ENCODE measurements at regions of chr6 and their contacts with region 1.

Region 1: DNA sequence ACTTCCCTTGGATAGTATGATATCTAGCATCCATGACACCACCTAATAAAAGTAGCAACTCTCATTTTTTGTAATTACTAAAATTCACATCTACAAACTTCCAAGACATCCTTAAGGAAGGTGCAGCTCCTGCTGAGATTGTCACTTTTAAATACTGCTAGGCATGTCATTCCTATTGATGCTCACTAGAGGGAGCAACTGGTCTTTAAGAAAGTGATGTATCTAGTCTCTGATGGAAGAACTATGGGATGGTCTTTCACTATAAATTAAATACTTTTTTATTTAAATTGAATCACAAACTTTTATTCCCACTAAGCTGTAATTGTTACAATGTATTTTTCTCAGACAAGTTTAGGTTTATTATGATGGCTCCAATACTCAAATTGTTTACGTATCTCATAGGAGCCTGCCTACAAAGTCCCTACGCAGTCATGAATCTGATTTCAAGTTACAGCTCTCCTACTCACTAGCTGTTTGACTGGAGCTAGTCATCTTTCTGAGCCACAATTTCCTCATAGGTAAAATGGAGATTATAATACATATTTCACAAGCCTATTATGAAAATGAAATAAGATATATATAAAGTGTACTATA is 8.1 kb upstream of the TSPYL1 start:
- DNase-seq: peak; percentile 21
- H3K4me3 ChIP-seq: no peak overlapping the region
- H3K27ac ChIP-seq: no peak overlapping the region
- H3K4me1 ChIP-seq: no peaks in the 10 kb centered on the region
- H3K27me3 ChIP-seq: no peaks in the 10 kb centered on the region
- CTCF ChIP-seq: peak; percentile 92
- EP300 ChIP-seq: no peak
- RAD21 ChIP-seq: peak; percentile 90

Region 2: GRCh38 chr6:115817161-115817560 is 470.6 kb before region 1 on chr6:
- CTCF ChIA-PET with region 1: no interaction called
- POLR2A ChIA-PET with region 1: no interaction called
- DNase-seq: no peak
- H3K4me3 ChIP-seq: no peak overlapping the region
- H3K27ac ChIP-seq: no peak overlapping the region
- H3K4me1 ChIP-seq: no peaks in the 10 kb centered on the region
- H3K27me3 ChIP-seq: no peaks in the 10 kb centered on the region
- CTCF ChIP-seq: no peak
- EP300 ChIP-seq: no peak
- RAD21 ChIP-seq: no peak

Region 3: GRCh38 chr6:116217069-116217468 is 70.7 kb before region 1 on chr6:
- CTCF ChIA-PET with region 1: interaction called, 10 read pairs
- POLR2A ChIA-PET with region 1: no interaction called
- DNase-seq: no peak
- H3K4me3 ChIP-seq: no peak overlapping the region
- H3K27ac ChIP-seq: peak overlapping the region; percentile 0 to 34; a peak in 1 of 4 replicates
- H3K4me1 ChIP-seq: peaks cover 3 to 9% of the 10 kb centered on the region in 2 experiments; a peak in 2 of 4 replicates
- H3K27me3 ChIP-seq: no peaks in the 10 kb centered on the region
- CTCF ChIP-seq: peak; percentile 70
- EP300 ChIP-seq: no peak
- RAD21 ChIP-seq: peak; percentile 58

Region 4: DNA sequence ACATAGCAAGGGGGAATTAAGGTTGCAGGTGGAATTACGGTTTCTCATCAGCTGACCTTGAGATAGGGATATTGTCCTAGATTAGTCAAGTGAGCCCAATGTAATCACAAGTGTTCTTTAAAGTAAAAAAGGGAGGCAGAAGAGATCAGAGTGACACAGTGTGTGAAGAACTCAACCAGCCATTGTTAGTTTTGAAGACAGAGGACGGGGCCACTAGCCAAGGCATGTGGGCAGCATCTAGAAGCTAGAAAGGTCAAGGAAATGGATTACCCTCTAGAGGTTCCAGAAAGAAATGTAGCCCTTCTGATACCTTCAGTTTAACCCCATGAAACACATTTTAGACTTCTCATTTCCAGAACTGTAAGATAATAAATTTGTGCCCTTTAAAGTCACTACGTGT is 10.5 kb after region 1 on chr6:
- CTCF ChIA-PET with region 1: interaction called, 16 read pairs
- POLR2A ChIA-PET with region 1: no interaction called
- DNase-seq: no peak
- H3K4me3 ChIP-seq: no peak overlapping the region
- H3K27ac ChIP-seq: no peak overlapping the region
- H3K4me1 ChIP-seq: no peaks in the 10 kb centered on the region; a peak in 1 of 4 replicates
- H3K27me3 ChIP-seq: no peaks in the 10 kb centered on the region
- CTCF ChIP-seq: no peak
- EP300 ChIP-seq: no peak
- RAD21 ChIP-seq: no peak

Region 5: GRCh38 chr6:116426551-116426950 is 138.8 kb after region 1 on chr6:
- CTCF ChIA-PET with region 1: interaction called, 10 read pairs
- POLR2A ChIA-PET with region 1: no interaction called
- DNase-seq: no peak
- H3K4me3 ChIP-seq: no peak overlapping the region
- H3K27ac ChIP-seq: no peak overlapping the region
- H3K4me1 ChIP-seq: no peaks in the 10 kb centered on the region
- H3K27me3 ChIP-seq: no peaks in the 10 kb centered on the region
- CTCF ChIP-seq: no peak
- EP300 ChIP-seq: no peak
- RAD21 ChIP-seq: no peak

Region 6: GRCh38 chr6:116511404-116512110 is 223.8 kb after region 1 on chr6 and contains the start of gene CALHM5:
- CTCF ChIA-PET with region 1: interaction called, 14 read pairs
- POLR2A ChIA-PET with region 1: no interaction called
- DNase-seq: no peak
- H3K4me3 ChIP-seq: peak within 1 kb of the TSS; percentile 9 to 53; a peak in 3 of 4 replicates
- H3K27ac ChIP-seq: peak within 1 kb of the TSS; percentile 43 to 55; a peak in 3 of 4 replicates
- H3K4me1 ChIP-seq: peaks cover 0 to 16% of the 10 kb centered on the region in 2 experiments; a peak in 3 of 4 replicates
- H3K27me3 ChIP-seq: no peaks in the 10 kb centered on the region
- CTCF ChIP-seq: peak; percentile 86
- EP300 ChIP-seq: peak in 1 of 2 experiments; percentile 22; a peak in 1 of 4 replicates
- RAD21 ChIP-seq: peak; percentile 45
- polyA plus RNA-seq, gene CALHM5: 0.38 and 0.55 TPM in 2 replicates

Region 7: DNA sequence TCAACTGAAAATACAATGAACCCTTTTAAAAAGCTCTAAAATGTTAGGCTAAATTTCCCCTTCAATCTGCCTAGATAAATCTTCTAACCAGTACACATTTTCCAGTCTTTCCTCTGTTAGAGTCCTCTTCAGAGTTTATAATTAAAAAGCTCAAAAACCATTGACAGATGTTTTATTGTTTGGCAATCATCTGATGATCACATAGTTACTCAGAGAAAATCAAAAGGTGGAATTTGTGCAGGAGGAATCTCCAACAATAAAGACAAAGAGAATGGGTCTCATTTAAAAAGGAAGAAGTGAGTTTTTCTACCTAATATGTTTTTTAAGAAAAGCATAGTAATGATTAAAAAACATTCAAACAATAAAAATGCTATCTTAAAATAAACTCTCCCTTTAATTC is 254.6 kb after region 1 on chr6:
- CTCF ChIA-PET with region 1: interaction called, 16 read pairs
- POLR2A ChIA-PET with region 1: no interaction called
- DNase-seq: no peak
- H3K4me3 ChIP-seq: no peak overlapping the region
- H3K27ac ChIP-seq: no peak overlapping the region
- H3K4me1 ChIP-seq: no peaks in the 10 kb centered on the region; a peak in 1 of 4 replicates
- H3K27me3 ChIP-seq: no peaks in the 10 kb centered on the region
- CTCF ChIP-seq: no peak
- EP300 ChIP-seq: no peak
- RAD21 ChIP-seq: no peak

Region 8: GRCh38 chr6:116561377-116562018 is 273.7 kb after region 1 on chr6:
- CTCF ChIA-PET with region 1: interaction called, 58 read pairs
- POLR2A ChIA-PET with region 1: no interaction called
- DNase-seq: peak; percentile 70
- H3K4me3 ChIP-seq: no peak overlapping the region; a peak in 1 of 4 replicates
- H3K27ac ChIP-seq: no peak overlapping the region
- H3K4me1 ChIP-seq: peaks cover 2 to 23% of the 10 kb centered on the region in 2 experiments; a peak in 3 of 4 replicates
- H3K27me3 ChIP-seq: no peaks in the 10 kb centered on the region
- CTCF ChIP-seq: peak; percentile 94
- EP300 ChIP-seq: no peak
- RAD21 ChIP-seq: peak; percentile 93